A549 (cell line): ENCODE measurements at regions of chr17 and their contacts with region 1.

Region 1: DNA sequence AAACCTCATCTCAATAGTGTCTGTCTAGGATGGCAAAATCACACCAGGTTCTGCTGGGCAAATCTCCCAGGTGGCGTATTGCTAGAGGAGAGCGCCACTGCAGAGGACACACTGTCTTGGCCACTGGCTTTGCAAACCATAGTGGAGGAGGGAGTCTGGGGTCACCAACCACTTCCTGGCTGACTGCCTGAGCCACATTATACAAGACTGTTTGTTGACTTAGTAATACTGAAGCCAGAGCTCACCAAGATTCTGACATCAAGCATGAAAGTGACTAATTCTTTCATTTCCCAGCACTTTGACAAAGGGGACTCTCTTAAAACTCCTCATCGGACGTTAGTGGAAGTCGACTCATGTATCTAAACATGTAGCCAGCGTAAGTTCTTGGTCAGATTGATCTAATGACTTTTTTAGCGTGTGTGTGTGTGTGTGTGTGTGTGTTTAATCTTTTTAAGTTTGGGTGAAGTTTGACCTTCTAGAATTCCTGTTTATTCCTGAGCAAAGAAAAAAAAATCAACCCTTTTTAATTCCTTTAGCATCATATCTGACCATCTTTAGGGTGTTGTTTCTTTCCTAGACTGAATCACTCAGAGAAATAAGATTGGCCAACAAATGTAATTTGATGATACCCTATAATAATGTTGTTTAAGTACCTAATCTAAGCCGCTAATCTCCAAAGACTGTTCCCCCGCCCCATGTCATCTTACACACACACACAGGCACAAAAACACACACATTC is 13.7 kb downstream of the PITPNC1 start:
- DNase-seq: peak; percentile 42 to 83
- ATAC-seq: peak; percentile 80
- H3K4me3 ChIP-seq: no peak overlapping the region
- H3K27ac ChIP-seq: peak overlapping the region; percentile 54 to 68; a peak in 5 of 6 replicates
- H3K4me1 ChIP-seq: peaks cover 19% of the 10 kb centered on the region
- CTCF ChIP-seq: no peak
- EP300 ChIP-seq: peak in 1 of 2 experiments; percentile 54; a peak in 1 of 5 replicates
- POLR2A ChIP-seq: no peak
- RAD21 ChIP-seq: no peak; a peak in 1 of 5 replicates

Region 2: GRCh38 chr17:67411397-67411796 is 20.6 kb after region 1 on chr17:
- CTCF ChIA-PET with region 1: interaction called, 10 read pairs
- POLR2A ChIA-PET with region 1: no interaction called
- DNase-seq: no peak
- ATAC-seq: no peak
- H3K4me3 ChIP-seq: no peak overlapping the region
- H3K27ac ChIP-seq: no peak overlapping the region
- H3K4me1 ChIP-seq: peaks cover 7% of the 10 kb centered on the region; the same call in 2 of the 3 replicates
- CTCF ChIP-seq: no peak
- EP300 ChIP-seq: no peak
- POLR2A ChIP-seq: no peak
- RAD21 ChIP-seq: no peak

Region 3: DNA sequence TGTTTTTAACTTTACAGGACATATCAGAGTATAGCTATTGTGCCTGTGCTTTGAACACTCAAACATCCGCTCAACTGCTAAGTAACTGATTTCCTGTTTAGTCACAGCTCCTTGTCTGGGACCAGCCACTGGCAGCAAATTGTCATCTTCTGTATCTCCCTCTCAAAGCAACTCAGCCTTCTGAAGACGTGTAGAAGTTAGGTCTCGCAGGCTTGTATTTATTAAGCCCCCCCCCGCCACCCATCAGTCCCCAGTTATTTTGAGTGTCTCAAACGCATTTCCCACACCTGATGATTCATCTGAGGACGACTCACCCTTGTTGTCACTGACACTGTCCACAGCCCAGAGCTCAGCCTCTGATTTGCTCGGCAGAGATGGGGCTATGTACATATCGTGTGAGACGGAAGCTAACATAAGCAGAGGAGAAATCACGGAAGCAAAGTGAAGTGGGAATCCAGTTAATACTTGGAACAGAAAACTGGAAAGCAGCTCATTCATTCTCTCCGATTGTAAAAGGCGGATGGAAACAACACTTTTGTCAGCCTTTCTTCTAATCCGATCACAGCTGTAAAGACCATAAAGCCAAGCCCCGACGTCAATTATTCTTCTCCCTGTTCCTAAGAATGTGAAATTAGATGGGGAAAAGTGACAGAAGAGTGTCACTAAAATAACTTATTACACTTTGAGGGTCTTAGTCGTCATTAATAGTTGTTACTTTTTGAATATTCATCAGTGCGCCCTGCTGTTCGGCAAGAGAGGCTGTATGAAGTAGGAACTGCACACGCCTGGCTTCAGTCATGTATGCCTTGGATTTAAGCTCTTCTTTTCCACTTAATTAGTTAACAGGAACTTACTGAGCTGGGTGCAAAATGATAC is 50.5 kb after region 1 on chr17:
- CTCF ChIA-PET with region 1: interaction called, 24 read pairs
- POLR2A ChIA-PET with region 1: interaction called, 3 read pairs
- DNase-seq: peak; percentile 81 to 85
- ATAC-seq: peak; percentile 94 to 96
- H3K4me3 ChIP-seq: peak overlapping the region; percentile 8
- H3K27ac ChIP-seq: peak overlapping the region; percentile 56 to 71
- H3K4me1 ChIP-seq: peaks cover 21% of the 10 kb centered on the region
- CTCF ChIP-seq: no peak
- EP300 ChIP-seq: no peak
- POLR2A ChIP-seq: no peak
- RAD21 ChIP-seq: no peak

Region 4: DNA sequence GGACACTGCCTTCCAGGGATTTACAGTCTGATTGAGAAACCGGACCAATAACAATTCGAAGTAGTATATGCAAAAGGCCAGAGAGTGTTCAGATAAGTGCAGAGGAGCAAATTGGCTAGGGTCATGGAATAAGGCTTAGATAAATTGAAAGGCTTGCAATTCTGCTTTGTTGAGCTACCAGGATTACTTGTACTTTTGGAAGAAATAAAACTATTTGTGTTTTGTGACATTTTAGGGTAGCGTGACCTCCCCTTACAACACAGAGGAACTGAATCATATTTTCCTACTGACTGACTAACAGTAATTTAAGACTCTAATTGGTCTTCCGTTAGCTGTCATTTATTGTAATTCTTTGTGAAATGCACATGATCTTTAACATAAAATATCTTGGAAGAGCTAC is 91.0 kb after region 1 on chr17:
- CTCF ChIA-PET with region 1: interaction called, 185 read pairs
- POLR2A ChIA-PET with region 1: no interaction called
- DNase-seq: no peak
- ATAC-seq: no peak
- H3K4me3 ChIP-seq: no peak overlapping the region
- H3K27ac ChIP-seq: no peak overlapping the region
- H3K4me1 ChIP-seq: no peaks in the 10 kb centered on the region
- CTCF ChIP-seq: no peak
- EP300 ChIP-seq: no peak
- POLR2A ChIP-seq: no peak
- RAD21 ChIP-seq: no peak

Region 5: DNA sequence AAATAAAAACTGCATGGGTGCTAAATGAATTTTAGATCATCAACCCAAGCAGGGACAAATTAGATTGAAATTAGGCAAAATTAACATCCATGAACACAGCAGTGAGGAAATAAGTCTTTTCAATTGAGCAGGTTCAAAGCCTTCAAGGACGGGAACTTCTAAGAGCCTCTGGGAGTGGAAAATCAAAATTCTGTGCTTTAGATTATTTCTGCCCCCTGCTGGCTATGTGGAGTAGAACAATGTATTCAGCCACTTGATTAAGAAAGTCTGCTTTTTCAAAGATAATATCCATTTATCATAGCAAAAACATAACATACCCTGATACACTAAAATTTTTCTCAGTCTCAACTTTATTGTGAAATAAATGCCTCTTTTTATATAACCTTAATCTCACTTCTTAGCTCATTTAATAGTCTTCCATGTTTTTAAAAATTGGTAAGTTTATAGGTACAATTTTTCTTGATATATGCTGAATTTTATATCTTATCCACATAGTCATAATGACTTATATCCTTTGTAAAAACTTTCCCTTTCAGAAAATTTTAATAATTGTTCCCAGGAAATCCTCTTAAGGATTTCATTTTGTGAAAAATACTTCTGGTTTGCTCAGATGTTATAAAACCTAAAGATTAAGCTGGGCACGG is 298.8 kb after region 1 on chr17:
- CTCF ChIA-PET with region 1: interaction called, 19 read pairs
- POLR2A ChIA-PET with region 1: no interaction called
- DNase-seq: peak; percentile 69 to 85
- ATAC-seq: peak; percentile 54 to 68; a peak in 2 of 6 replicates
- H3K4me3 ChIP-seq: no peak overlapping the region
- H3K27ac ChIP-seq: no peak overlapping the region
- H3K4me1 ChIP-seq: no peaks in the 10 kb centered on the region
- CTCF ChIP-seq: peak; percentile 93
- EP300 ChIP-seq: no peak
- POLR2A ChIP-seq: no peak
- RAD21 ChIP-seq: peak; percentile 78 to 83